Mammary epithelial cell (primary cell): ENCODE measurements at regions of chr9 and their contacts with region 1.

Region 1: GRCh38 chr9:34252670-34253459 is 74.0 kb downstream of the UBAP1 start:
- DNase-seq: no peak
- H3K4me3 ChIP-seq: no peak overlapping the region
- H3K27ac ChIP-seq: peak overlapping the region; percentile 82
- H3K4me1 ChIP-seq: peaks cover 79% of the 10 kb centered on the region
- H3K27me3 ChIP-seq: no peaks in the 10 kb centered on the region
- CTCF ChIP-seq: peak; percentile 94 to 96

Region 2: DNA sequence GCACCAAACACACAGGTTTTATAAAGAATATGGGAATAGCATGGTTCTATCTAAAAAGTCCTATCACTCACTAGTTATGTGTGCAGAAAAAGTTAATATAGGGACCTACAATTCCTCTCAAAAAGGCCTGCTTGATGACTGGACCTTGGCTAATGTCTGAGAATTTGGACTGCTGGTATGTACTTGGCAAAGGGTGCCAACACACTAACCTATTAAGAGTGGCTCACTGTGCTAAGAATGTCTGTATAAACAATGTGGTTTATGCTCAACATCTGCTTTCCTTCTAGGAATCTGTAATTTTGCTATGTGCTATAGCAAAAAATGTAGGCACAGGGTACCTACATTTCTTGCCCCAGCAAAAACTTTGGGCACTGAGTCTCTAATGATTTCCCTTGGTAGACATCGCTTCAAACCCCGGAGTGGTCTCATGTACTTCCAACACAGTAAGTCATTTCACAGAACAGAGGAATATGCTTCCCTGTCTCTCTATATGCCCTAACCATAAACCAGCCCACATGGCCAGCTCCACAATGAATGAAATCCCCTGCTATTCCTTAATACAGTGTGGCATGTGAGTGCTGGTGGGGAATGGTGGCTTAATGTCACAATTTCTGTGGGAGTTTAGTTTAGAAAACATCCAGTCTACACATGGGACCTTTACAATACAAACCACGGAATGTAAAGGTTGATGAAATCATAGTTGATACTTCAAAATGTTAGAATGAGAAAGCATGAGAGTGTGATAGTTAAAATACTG is 305.9 kb before region 1 on chr9:
- CTCF ChIA-PET with region 1: interaction called, 5 read pairs
- dilution Hi-C with region 1: no loop called
- in situ Hi-C with region 1: no loop called
- intact Hi-C with region 1: loop called (anchors 5 kb)
- DNase-seq: peak; percentile 87
- H3K4me3 ChIP-seq: no peak overlapping the region
- H3K27ac ChIP-seq: peak overlapping the region; percentile 59
- H3K4me1 ChIP-seq: peaks cover 34% of the 10 kb centered on the region
- H3K27me3 ChIP-seq: no peaks in the 10 kb centered on the region
- CTCF ChIP-seq: no peak

Region 3: DNA sequence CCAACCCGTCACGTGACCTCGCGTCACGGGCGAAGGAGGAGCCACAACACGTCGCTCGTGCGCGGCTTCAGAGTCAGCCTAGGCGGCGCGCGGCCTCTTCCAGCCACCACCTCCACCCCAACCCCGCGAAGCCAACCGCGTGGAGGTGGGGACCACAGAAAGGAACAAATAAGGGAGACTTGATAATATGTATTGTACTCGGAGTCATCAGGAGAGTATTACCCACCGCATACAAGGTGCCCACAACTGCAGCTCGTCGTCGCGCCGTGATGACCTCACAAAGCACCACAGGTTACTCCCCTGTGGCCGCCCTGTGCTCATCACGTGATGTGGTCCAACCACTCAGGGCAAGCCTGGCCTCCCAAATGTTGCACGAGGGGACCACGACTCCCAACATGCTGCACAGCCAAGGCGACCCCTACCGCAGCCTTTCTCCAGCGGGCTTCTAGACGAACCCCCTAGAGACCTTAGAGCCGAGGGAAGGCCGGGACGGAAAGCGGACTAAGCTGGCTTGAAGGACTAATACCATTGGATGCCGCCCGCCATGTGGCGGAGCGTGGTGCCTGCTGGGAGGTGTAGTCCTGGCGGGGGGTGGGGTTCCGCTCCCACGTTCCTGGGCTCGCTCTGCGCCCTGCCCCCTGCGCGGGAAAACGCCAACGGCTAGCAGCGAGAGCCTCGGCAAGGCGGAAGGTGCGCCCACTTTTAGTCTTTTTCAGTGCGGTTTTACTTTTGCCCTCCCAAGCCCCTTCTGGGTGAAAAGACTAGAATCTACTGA is 203.8 kb before region 1 on chr9:
- CTCF ChIA-PET with region 1: no interaction called
- dilution Hi-C with region 1: no loop called
- in situ Hi-C with region 1: no loop called
- intact Hi-C with region 1: loop called (anchors 1 kb)
- DNase-seq: peak; percentile 97
- H3K4me3 ChIP-seq: peak overlapping the region; percentile 49 to 97 (median 82)
- H3K27ac ChIP-seq: peak overlapping the region; percentile 98
- H3K4me1 ChIP-seq: peaks cover 16% of the 10 kb centered on the region
- H3K27me3 ChIP-seq: no peaks in the 10 kb centered on the region
- CTCF ChIP-seq: no peak

Region 4: DNA sequence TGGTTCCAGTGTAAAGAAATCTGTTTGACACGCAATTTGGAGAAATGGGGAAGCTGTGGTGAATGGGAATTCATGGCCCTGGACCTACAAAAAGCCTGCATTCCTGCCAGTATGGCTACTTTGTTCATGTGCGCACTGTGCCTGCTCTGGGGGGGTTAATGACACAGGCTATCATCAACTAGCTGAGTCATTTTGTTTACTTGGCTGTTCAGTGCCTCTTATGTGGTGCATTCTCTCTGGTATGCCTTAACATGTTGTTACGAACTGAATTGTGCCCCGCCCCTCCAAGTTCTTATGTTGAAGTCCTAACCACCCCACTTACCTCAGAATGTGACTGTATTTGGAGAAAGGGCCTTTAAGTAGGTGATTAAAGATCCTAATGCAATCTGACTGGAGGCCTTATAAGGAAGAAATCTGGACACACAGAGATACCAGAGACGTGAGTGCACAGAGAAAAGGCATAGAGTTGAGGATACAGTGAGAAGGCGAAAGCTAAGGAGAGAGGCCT is 94.4 kb before region 1 on chr9:
- CTCF ChIA-PET with region 1: interaction called, 3 read pairs
- dilution Hi-C with region 1: no loop called
- in situ Hi-C with region 1: no loop called
- intact Hi-C with region 1: loop called (anchors 1 kb)
- DNase-seq: peak; percentile 96
- H3K4me3 ChIP-seq: no peak overlapping the region
- H3K27ac ChIP-seq: peak overlapping the region; percentile 9
- H3K4me1 ChIP-seq: peaks cover 14% of the 10 kb centered on the region
- H3K27me3 ChIP-seq: no peaks in the 10 kb centered on the region
- CTCF ChIP-seq: no peak

Region 5: GRCh38 chr9:34185778-34186551 is 66.9 kb before region 1 on chr9:
- CTCF ChIA-PET with region 1: no interaction called
- dilution Hi-C with region 1: no loop called
- in situ Hi-C with region 1: no loop called
- intact Hi-C with region 1: loop called (anchors 1 kb)
- DNase-seq: peak; percentile 97
- H3K4me3 ChIP-seq: no peak overlapping the region
- H3K27ac ChIP-seq: peak overlapping the region; percentile 67
- H3K4me1 ChIP-seq: peaks cover 20% of the 10 kb centered on the region
- H3K27me3 ChIP-seq: no peaks in the 10 kb centered on the region
- CTCF ChIP-seq: no peak

Region 6: DNA sequence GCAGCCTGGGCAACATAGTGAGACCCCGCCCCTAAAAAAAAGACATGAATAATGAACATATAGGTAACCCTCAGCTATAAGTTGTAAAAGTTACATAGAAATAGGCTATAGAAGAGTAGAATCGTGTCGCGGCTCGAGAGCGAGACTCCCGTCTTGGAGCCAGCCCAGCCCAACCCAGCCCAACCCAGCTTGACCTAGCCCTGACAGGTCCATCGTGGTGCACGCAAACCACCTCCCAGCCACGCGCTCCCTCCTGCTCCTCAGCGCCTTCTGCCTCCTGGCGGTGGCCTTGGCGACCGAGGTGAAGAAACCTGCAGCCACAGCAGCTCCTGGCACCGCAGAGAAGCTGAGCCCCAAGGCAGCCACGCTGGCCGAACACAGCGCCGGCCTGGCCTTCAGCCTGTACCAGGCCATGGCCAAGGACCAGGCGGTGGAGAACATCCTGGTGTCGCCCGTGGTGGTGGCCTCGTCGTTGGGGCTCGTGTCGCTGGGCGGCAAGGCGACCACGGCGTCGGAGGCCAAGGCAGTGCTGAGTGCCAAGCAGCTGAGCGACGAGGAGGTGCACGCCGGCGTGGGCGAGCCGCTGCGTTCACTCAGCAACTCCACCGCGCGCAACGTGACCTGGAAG is 65.4 kb after region 1 on chr9:
- CTCF ChIA-PET with region 1: no interaction called
- dilution Hi-C with region 1: no loop called
- in situ Hi-C with region 1: no loop called
- intact Hi-C with region 1: no loop called
- DNase-seq: no peak
- H3K4me3 ChIP-seq: no peak overlapping the region
- H3K27ac ChIP-seq: no peak overlapping the region
- H3K4me1 ChIP-seq: no peaks in the 10 kb centered on the region
- H3K27me3 ChIP-seq: no peaks in the 10 kb centered on the region
- CTCF ChIP-seq: no peak

Region 7: GRCh38 chr9:34376596-34377403 is 123.9 kb after region 1 on chr9 and contains the start of gene MYORG:
- CTCF ChIA-PET with region 1: interaction called, 30 read pairs
- dilution Hi-C with region 1: no loop called
- in situ Hi-C with region 1: loop called in 1 of 2 experiments (anchors 10 kb)
- intact Hi-C with region 1: loop called (anchors 1 kb)
- DNase-seq: peak; percentile 98
- H3K4me3 ChIP-seq: peak within 1 kb of the TSS; percentile 73 to 85 (median 84)
- H3K27ac ChIP-seq: peak within 1 kb of the TSS; percentile 42
- H3K4me1 ChIP-seq: peaks cover 39% of the 10 kb centered on the region
- H3K27me3 ChIP-seq: no peaks in the 10 kb centered on the region
- CTCF ChIP-seq: no peak
- total RNA-seq, gene MYORG: 23.8 to 35.0 TPM

Region 8: GRCh38 chr9:34603610-34604231 is 350.9 kb after region 1 on chr9:
- CTCF ChIA-PET with region 1: interaction called, 3 read pairs
- dilution Hi-C with region 1: no loop called
- in situ Hi-C with region 1: no loop called
- intact Hi-C with region 1: loop called (anchors 5 kb)
- DNase-seq: peak; percentile 54
- H3K4me3 ChIP-seq: no peak overlapping the region
- H3K27ac ChIP-seq: no peak overlapping the region
- H3K4me1 ChIP-seq: peaks cover 15% of the 10 kb centered on the region
- H3K27me3 ChIP-seq: no peaks in the 10 kb centered on the region
- CTCF ChIP-seq: peak; percentile 92 to 96